HepG2 (cell line): ENCODE measurements at regions of chr1 and their contacts with region 1.

Region 1: DNA sequence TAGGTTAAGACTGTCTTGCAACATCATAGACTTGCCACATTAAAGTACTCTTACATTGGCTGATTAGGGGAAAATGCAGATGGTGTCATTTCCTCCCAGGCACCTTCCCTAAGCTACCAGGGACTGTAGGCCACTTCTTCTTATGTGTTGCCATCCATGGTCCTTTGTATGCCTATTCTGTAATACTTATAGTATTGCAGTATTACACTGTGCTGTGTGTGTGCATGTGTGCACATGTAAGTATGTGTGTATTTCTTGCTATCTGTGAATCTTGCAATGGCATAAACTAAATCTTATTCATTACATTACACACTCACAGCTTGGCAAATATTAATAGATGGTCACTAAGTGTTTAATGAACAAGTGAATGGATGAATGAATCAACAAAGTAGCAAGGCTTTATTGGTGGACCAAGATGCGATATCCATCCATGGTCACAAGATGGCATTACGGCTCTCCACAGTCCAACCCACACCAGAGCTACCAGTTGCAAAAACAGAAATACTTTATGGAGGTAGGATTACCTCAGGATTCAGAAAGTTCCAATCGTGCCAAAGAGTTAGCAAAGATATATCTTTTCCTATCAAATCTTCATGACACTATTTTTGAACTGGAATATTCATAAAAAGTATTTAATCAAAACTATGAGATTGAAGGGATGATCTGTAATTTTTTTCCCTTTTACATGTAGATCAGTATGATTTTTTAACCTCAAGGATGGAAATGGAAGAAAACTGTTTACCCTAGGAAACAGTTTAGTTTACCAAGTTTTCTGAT is 160.2 kb downstream of the DENND1B start:
- DNase-seq: peak; percentile 60
- ATAC-seq: peak; percentile 98
- H3K4me3 ChIP-seq: no peak overlapping the region
- H3K27ac ChIP-seq: no peak overlapping the region
- H3K4me1 ChIP-seq: peaks cover 35% of the 10 kb centered on the region
- H3K27me3 ChIP-seq: no peaks in the 10 kb centered on the region; a peak in 1 of 5 replicates
- CTCF ChIP-seq: peak; percentile 83
- EP300 ChIP-seq: no peak
- POLR2A ChIP-seq: no peak
- RAD21 ChIP-seq: peak; percentile 83

Region 2: GRCh38 chr1:197526736-197527371 is 88.2 kb before region 1 on chr1:
- CTCF ChIA-PET with region 1: no interaction called
- POLR2A ChIA-PET with region 1: no interaction called
- in situ Hi-C with region 1: no loop called
- intact Hi-C with region 1: loop called (anchors 5 kb)
- DNase-seq: peak; percentile 21
- ATAC-seq: no peak
- H3K4me3 ChIP-seq: no peak overlapping the region
- H3K27ac ChIP-seq: no peak overlapping the region
- H3K4me1 ChIP-seq: no peaks in the 10 kb centered on the region
- H3K27me3 ChIP-seq: no peaks in the 10 kb centered on the region
- CTCF ChIP-seq: no peak; the same call in 1 of the 2 replicates
- EP300 ChIP-seq: no peak
- POLR2A ChIP-seq: no peak
- RAD21 ChIP-seq: no peak

Region 3: GRCh38 chr1:197761621-197762020 is 146.5 kb after region 1 on chr1:
- CTCF ChIA-PET with region 1: no interaction called
- POLR2A ChIA-PET with region 1: no interaction called
- in situ Hi-C with region 1: no loop called
- intact Hi-C with region 1: no loop called
- DNase-seq: no peak
- ATAC-seq: no peak
- H3K4me3 ChIP-seq: no peak overlapping the region
- H3K27ac ChIP-seq: no peak overlapping the region
- H3K4me1 ChIP-seq: peaks cover 7% of the 10 kb centered on the region; the same call in 1 of the 2 replicates
- H3K27me3 ChIP-seq: no peaks in the 10 kb centered on the region
- CTCF ChIP-seq: no peak
- EP300 ChIP-seq: no peak
- POLR2A ChIP-seq: no peak
- RAD21 ChIP-seq: no peak

Region 4: GRCh38 chr1:197775282-197776262 is 160.5 kb after region 1 on chr1 and contains the start of gene DENND1B:
- CTCF ChIA-PET with region 1: no interaction called
- POLR2A ChIA-PET with region 1: no interaction called
- in situ Hi-C with region 1: no loop called
- intact Hi-C with region 1: loop called (anchors 2 kb)
- DNase-seq: peak; percentile 52
- ATAC-seq: peak; percentile 92
- H3K4me3 ChIP-seq: peak within 1 kb of the TSS; percentile 65 to 93 (median 66)
- H3K27ac ChIP-seq: peak within 1 kb of the TSS; percentile 72
- H3K4me1 ChIP-seq: peaks cover 23% of the 10 kb centered on the region
- H3K27me3 ChIP-seq: no peaks in the 10 kb centered on the region
- CTCF ChIP-seq: peak; percentile 40; the same call in 1 of the 2 replicates
- EP300 ChIP-seq: no peak
- POLR2A ChIP-seq: peak; percentile 40 to 57; a peak in 2 of 4 replicates
- RAD21 ChIP-seq: no peak; the same call in 1 of the 2 replicates
- total RNA-seq, gene DENND1B: 5.7 and 7.5 TPM in 2 replicates

Region 5: DNA sequence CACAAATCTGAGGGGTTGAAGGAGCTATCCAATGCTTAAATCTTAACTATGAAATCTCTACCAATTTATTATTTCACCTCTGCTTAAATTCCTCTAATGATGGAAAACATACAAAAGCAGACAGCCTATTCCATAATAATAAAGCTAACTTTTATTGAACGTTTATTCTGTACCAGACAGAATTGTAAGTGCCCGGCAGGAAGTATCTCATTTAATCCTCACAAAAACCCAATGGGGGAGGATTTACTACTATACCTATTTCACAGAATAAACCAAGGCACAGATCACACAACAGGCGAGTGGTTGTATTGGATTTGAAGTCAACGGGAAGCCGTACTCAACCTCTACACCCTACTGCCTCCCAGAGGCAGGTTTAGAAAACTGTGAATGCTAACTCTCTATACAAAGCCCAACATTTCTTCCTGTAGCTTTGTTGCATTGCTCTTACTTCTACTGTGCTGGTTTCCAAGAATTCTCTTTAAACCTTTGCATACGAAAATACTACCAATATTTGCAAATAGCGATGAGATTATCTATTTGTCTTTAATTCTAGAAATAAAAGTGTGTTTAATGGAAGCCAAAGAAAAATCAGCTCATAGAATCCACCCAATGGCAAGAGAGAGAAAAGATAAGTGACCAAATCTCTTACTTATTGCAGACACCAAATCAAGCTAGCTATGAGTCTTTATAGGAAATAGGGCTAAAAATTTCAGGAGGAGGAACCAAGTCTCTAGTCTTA is 253.8 kb after region 1 on chr1:
- CTCF ChIA-PET with region 1: interaction called, 17 read pairs
- POLR2A ChIA-PET with region 1: no interaction called
- in situ Hi-C with region 1: loop called (anchors 5 kb)
- intact Hi-C with region 1: loop called (anchors 1 kb)
- DNase-seq: peak; percentile 50
- ATAC-seq: peak; percentile 96
- H3K4me3 ChIP-seq: no peak overlapping the region
- H3K27ac ChIP-seq: no peak overlapping the region
- H3K4me1 ChIP-seq: no peaks in the 10 kb centered on the region
- H3K27me3 ChIP-seq: no peaks in the 10 kb centered on the region
- CTCF ChIP-seq: peak; percentile 80
- EP300 ChIP-seq: no peak
- POLR2A ChIP-seq: no peak
- RAD21 ChIP-seq: peak; percentile 80

Region 6: GRCh38 chr1:197915862-197916499 is 300.9 kb after region 1 on chr1:
- CTCF ChIA-PET with region 1: interaction called, 9 read pairs
- POLR2A ChIA-PET with region 1: no interaction called
- in situ Hi-C with region 1: loop called (anchors 5 kb)
- intact Hi-C with region 1: loop called (anchors 1 kb)
- DNase-seq: peak; percentile 67
- ATAC-seq: peak; percentile 92
- H3K4me3 ChIP-seq: peak overlapping the region; percentile 30 to 68 (median 50)
- H3K27ac ChIP-seq: no peak overlapping the region
- H3K4me1 ChIP-seq: peaks cover 57% of the 10 kb centered on the region
- H3K27me3 ChIP-seq: peaks cover 20 to 91% of the 10 kb centered on the region in 2 experiments
- CTCF ChIP-seq: peak; percentile 69
- EP300 ChIP-seq: no peak
- POLR2A ChIP-seq: no peak
- RAD21 ChIP-seq: peak; percentile 63

Region 7: GRCh38 chr1:197924516-197925123 is 309.5 kb after region 1 on chr1:
- CTCF ChIA-PET with region 1: interaction called, 17 read pairs
- POLR2A ChIA-PET with region 1: no interaction called
- in situ Hi-C with region 1: loop called (anchors 5 kb)
- intact Hi-C with region 1: loop called (anchors 1 kb)
- DNase-seq: peak; percentile 53
- ATAC-seq: peak; percentile 81
- H3K4me3 ChIP-seq: no peak overlapping the region
- H3K27ac ChIP-seq: no peak overlapping the region
- H3K4me1 ChIP-seq: no peaks in the 10 kb centered on the region
- H3K27me3 ChIP-seq: peaks cover 0 to 5% of the 10 kb centered on the region in 2 experiments; a peak in 4 of 5 replicates
- CTCF ChIP-seq: peak; percentile 77
- EP300 ChIP-seq: no peak
- POLR2A ChIP-seq: no peak
- RAD21 ChIP-seq: peak; percentile 51; the same call in 1 of the 2 replicates

Region 8: GRCh38 chr1:197994907-197995407 is 379.9 kb after region 1 on chr1:
- CTCF ChIA-PET with region 1: no interaction called
- POLR2A ChIA-PET with region 1: no interaction called
- in situ Hi-C with region 1: no loop called
- intact Hi-C with region 1: loop called (anchors 5 kb)
- DNase-seq: peak; percentile 76
- ATAC-seq: peak; percentile 97
- H3K4me3 ChIP-seq: peak overlapping the region; percentile 21 to 34 (median 31); a peak in 4 of 6 replicates
- H3K27ac ChIP-seq: peak overlapping the region; percentile 31
- H3K4me1 ChIP-seq: peaks cover 19% of the 10 kb centered on the region
- H3K27me3 ChIP-seq: no peaks in the 10 kb centered on the region
- CTCF ChIP-seq: no peak
- EP300 ChIP-seq: peak in 1 of 2 experiments; percentile 78; a peak in 1 of 4 replicates
- POLR2A ChIP-seq: no peak
- RAD21 ChIP-seq: no peak